ENCODE measurements at regions of chr19 and their contacts with region 1.

Region 1: DNA sequence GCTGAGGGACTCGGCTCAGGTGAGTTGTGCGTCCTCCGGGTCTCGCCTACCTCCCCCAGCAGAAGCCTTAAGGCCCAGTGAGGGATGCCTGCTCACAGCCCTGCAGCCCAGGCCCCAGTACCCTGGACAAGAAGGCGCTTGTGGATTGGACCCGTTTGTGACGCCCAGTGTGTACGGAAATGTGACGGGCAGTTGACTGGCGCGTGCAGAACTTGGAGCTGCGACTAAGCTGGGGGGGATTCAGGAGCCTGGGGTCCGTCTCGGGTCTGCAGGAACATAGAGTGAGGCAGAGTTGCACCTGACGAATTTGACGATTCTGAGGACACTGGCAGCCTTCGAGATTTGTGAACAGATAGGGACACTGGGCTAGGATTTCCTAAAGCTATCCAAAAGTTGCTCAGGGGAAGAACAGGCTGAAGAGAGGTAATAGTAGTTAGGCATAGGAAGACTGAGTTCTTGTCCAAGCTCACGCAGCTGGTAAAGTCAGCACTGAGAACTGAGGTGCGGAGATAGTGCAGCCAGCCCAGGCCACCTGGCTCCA is 519 bp downstream of the ZNF551 start:
- DNase-seq: no peak
- H3K4me3 Mint-ChIP-seq: peak overlapping the region; percentile 96
- H3K27ac Mint-ChIP-seq: peak overlapping the region; percentile 93
- H3K4me1 Mint-ChIP-seq: peaks cover 22% of the 10 kb centered on the region
- H3K27me3 Mint-ChIP-seq: no peaks in the 10 kb centered on the region

Region 2: DNA sequence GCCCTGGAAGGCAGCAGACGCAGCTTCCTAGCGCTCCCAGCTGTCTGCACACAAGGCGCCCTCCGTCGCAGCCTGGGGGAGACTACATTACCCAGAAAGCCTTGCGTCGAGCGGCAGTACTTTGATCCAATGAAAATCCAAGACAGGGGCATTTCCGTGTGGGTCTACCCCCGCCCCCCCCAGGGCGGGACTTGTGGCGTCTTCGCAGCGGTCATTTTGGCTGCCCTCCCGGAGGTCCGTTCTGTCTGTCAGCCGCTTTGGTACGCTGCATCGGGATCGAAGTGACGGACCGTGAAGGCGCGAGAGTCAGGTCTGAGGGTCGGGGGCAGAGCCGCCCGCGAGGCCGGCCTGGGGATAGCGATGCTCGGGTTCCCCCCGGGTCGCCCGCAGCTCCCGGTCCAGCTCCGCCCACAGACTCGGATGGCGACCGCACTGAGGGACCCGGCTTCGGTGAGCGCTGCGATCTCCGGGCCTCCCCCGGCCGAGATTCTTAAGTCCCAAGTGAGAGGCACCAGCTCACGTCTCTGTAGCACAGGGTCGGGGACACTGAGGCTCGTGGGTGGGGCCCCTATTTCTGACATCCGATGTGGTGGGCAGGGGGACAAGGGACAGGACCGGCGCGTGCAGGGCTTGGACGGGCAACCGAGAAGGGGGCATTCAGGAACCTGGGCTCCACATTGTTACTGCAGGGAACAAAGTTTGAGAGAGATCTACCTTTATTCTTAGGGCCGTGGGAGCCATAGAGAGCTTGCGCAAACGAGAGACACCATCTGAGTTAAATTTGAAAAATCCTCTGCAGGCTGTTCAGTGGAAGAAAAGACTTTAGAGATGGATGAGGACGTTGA is 49.1 kb before region 1 on chr19 and contains the start of gene ZNF211:
- intact Hi-C with region 1: loop called (anchors 1 kb)
- DNase-seq: peak; percentile 95
- H3K4me3 Mint-ChIP-seq: peak within 1 kb of the TSS; percentile 87
- H3K27ac Mint-ChIP-seq: peak within 1 kb of the TSS; percentile 87
- H3K4me1 Mint-ChIP-seq: peaks cover 14% of the 10 kb centered on the region
- H3K27me3 Mint-ChIP-seq: no peaks in the 10 kb centered on the region
- total RNA-seq, gene ZNF211: 7.7 and 10.0 TPM in 2 replicates

Region 3: DNA sequence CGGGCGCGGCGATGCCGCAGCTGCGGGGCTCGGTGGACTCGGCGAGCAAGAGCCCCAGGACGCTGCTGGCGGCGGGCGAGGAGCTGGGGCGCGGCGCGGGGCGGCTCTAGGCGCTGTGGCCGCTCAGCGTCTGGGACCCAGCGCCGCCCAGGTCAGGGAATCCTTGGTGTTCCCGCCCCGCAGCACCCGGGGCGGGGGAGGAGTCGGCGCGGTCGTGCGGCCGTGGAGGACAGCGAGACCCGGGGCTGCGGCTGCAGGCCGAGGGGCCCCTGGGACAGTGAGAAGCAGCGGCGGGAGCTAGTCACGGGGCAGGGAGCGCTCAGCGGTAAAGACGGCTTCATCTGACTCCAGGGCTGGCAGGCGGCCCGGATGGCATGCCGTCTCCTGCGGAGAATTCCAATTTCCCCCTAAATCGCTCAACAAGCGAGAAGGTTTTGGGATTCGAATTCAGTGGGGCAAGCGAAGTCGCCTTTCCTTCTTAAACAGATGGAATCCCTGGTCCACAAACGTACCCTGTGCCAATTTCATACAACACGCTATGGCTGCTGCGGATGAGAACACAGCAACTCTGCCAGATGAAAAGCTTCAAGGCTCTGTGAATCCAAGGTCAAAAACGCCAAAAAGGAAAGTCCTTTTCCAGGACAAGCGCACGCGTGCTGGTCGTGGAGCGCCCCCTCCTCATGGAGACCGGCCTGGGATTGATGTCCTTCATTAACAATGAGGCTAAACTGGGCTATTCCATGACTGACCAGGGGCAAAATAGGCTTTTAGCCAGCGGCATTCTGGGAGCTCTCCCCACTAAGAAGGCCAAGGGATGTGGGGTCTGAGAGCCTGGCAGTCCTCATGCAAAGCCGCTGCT is 17.8 kb before region 1 on chr19:
- intact Hi-C with region 1: no loop called
- DNase-seq: peak; percentile 59
- H3K4me3 Mint-ChIP-seq: peak overlapping the region; percentile 87
- H3K27ac Mint-ChIP-seq: no peak overlapping the region
- H3K4me1 Mint-ChIP-seq: peaks cover 3% of the 10 kb centered on the region
- H3K27me3 Mint-ChIP-seq: peaks cover 8% of the 10 kb centered on the region

Measured in activated CD4-positive, alpha-beta T cell treated with anti-CD3 and anti-CD28 coated beads, Interleukin-2, amount 10 ng/mL, durations not matched to agents 24 days and 14 days (primary cell).